ENCODE measurements at regions of chr19 and their contacts with region 1.

Region 1: DNA sequence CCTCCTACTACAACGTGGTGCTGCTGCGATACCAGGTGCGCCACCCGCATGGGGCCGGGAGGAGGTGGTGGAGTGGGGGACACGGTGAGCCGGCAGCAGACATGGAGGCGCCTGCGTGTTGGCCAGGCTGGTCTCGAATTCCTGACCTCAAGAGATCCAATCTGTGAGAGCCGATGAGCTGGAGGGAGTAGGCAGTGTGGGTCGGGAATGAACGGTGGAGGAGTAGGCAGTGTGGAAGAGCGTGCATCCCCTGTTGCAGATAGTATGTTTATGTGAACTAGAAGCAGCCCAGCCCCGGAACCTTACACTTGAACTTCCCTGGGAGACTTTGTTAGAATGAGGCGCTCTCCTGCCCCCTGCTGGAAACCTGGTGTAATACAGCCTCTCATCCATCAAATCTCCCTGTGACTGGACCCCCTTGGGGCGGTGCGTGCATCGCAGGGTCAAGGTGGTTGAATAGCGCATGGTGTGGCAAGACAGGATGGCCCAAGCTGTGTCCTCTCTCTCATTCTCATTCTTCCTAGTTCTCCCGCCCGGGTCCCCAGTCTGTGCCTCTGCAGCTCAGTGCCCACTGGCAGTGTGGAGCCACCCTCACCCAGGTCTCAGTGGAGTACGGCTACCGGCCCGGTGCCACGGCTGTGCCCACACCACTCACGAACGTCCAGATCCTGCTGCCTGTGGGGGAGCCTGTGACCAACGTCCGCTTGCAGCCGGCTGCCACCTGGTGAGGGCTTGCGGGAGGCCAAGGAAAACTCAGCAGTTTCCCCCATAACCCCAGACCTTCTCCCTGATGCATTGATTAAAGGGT is 10.5 kb upstream of the B3GNT3 start:
- DNase-seq: peak; percentile 56 to 81 (median 73)
- ATAC-seq: peak; percentile 90
- H3K4me3 ChIP-seq: no peak overlapping the region
- H3K4me3 Mint-ChIP-seq: no peak overlapping the region
- H3K27ac ChIP-seq: no peak overlapping the region
- H3K27ac Mint-ChIP-seq: peak overlapping the region in 8 of 9 donors; percentile 13 to 94 (median 56)
- H3K4me1 ChIP-seq: peaks cover 0 to 6% of the 10 kb centered on the region in 2 donors
- H3K4me1 Mint-ChIP-seq: peaks cover 10 to 22% (median 18%) of the 10 kb centered on the region in 7 donors
- H3K27me3 ChIP-seq: no peaks in the 10 kb centered on the region
- H3K27me3 Mint-ChIP-seq: no peaks in the 10 kb centered on the region

Region 2: GRCh38 chr19:17605761-17606745 is 178.4 kb before region 1 on chr19:
- CTCF ChIA-PET with region 1: no interaction called
- POLR2A ChIA-PET with region 1: no interaction called
- intact Hi-C with region 1: loop called in 1 of 2 experiments (anchors 1 kb)
- DNase-seq: peak; percentile 72 to 93 (median 87)
- ATAC-seq: peak; percentile 96
- H3K4me3 ChIP-seq: peak overlapping the region; percentile 63
- H3K4me3 Mint-ChIP-seq: peak overlapping the region; percentile 64 to 91 (median 81)
- H3K27ac ChIP-seq: peak overlapping the region; percentile 48
- H3K27ac Mint-ChIP-seq: peak overlapping the region in 7 of 9 donors; percentile 63 to 84 (median 74)
- H3K4me1 ChIP-seq: peaks cover 2 to 7% of the 10 kb centered on the region in 2 donors
- H3K4me1 Mint-ChIP-seq: peaks cover 0 to 14% (median 10%) of the 10 kb centered on the region in 7 donors
- H3K27me3 ChIP-seq: no peaks in the 10 kb centered on the region
- H3K27me3 Mint-ChIP-seq: peaks cover 29 to 45% (median 33%) of the 10 kb centered on the region in 5 donors

Region 3: DNA sequence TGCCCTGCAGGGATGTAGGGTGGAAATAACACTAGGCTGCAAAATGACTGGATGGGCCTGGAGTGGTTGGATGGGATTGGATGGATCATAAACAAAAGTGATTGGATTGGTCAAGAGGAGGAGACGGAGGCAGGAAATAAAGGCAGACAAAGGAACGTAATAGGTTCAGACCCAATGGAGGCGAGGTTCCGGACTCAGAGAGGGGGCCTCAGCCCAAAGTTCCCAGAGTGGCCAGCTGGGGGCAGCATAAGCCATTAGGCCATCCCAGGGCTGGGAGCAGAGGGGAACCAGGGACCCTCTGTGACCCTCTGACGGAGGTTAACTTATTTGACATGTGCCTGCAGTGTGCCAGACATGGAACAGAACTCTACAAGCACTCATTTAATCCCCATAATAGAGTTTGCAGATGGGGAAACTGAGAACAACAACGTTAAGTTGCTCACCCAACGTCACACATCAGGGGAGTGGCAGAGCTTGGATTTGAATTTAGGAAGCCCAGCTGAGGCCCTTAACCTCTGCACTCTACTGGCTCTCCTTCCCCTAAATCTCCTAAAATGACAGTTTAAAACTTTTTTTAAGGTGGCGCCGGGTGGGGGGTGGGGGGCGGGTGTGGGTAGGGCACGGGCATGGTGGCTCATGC is 80.5 kb before region 1 on chr19:
- CTCF ChIA-PET with region 1: interaction called, 9 read pairs
- POLR2A ChIA-PET with region 1: no interaction called
- intact Hi-C with region 1: loop called (anchors 1 to 5 kb)
- DNase-seq: peak; percentile 51 to 77 (median 65)
- ATAC-seq: peak; percentile 97
- H3K4me3 ChIP-seq: no peak overlapping the region
- H3K4me3 Mint-ChIP-seq: no peak overlapping the region
- H3K27ac ChIP-seq: no peak overlapping the region
- H3K27ac Mint-ChIP-seq: peak overlapping the region in 1 of 9 donors; percentile 42
- H3K4me1 ChIP-seq: no peaks in the 10 kb centered on the region
- H3K4me1 Mint-ChIP-seq: peaks cover 0 to 5% (median 0%) of the 10 kb centered on the region in 7 donors
- H3K27me3 ChIP-seq: no peaks in the 10 kb centered on the region
- H3K27me3 Mint-ChIP-seq: peaks cover 0 to 10% (median 7%) of the 10 kb centered on the region in 5 donors

Region 4: GRCh38 chr19:17725422-17726078 is 58.9 kb before region 1 on chr19:
- CTCF ChIA-PET with region 1: no interaction called
- POLR2A ChIA-PET with region 1: no interaction called
- intact Hi-C with region 1: loop called in 1 of 2 experiments (anchors 1 kb)
- DNase-seq: no peak
- ATAC-seq: peak; percentile 20
- H3K4me3 ChIP-seq: no peak overlapping the region
- H3K4me3 Mint-ChIP-seq: no peak overlapping the region
- H3K27ac ChIP-seq: no peak overlapping the region
- H3K27ac Mint-ChIP-seq: peak overlapping the region in 6 of 9 donors; percentile 8 to 69 (median 52)
- H3K4me1 ChIP-seq: peaks cover 12% of the 10 kb centered on the region in 2 donors
- H3K4me1 Mint-ChIP-seq: peaks cover 24 to 40% (median 34%) of the 10 kb centered on the region in 7 donors
- H3K27me3 ChIP-seq: no peaks in the 10 kb centered on the region
- H3K27me3 Mint-ChIP-seq: no peaks in the 10 kb centered on the region

Measured in naive thymus-derived CD4-positive, alpha-beta T cell (primary cell).